ENCODE measurements at regions of chr6 and their contacts with region 1.

Region 1: GRCh38 chr6:4487546-4487945 is 288.7 kb upstream of the CDYL start:
- DNase-seq: peak; percentile 66
- H3K4me3 ChIP-seq: no peak overlapping the region
- H3K27ac ChIP-seq: peak overlapping the region; percentile 67
- H3K4me1 ChIP-seq: 0 out of 2 replicates have a peak, but pooled peaks cover 7% of the 10 kb centered on the region
- H3K27me3 ChIP-seq: no peaks in the 10 kb centered on the region
- CTCF ChIP-seq: no peak

Region 2: DNA sequence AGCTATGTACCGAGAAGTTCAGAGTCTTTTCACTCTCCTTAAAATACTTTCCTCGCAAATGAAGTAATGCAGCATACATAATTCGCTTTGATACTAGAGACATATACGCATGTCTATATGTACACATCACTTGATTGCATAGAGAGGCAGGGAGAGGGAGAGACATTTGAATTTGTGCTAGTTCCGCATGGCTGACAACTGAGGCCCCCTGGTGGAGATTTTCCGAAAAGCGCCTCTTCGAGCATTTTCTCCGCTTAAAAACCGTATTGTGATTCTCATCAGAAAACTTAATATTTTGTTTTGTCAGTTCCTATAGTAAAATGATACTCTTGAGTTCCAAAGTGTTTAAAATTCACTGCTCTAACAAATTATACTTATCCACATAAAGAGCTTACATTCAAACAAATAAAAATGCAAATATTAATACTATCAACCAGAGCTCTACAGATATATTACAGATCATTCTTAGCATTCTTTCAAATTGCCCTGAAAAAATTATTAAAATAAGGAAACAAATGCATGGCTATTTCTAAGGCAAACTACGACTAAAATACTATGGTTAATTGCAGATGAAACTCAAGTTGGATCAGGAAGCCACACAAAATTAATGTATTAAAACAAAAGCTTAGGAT is 1737.5 kb before region 1 on chr6:
- CTCF ChIA-PET with region 1: interaction called, 18 read pairs
- POLR2A ChIA-PET with region 1: no interaction called
- intact Hi-C with region 1: no loop called
- DNase-seq: peak in 1 of 2 experiments; percentile 30
- H3K4me3 ChIP-seq: no peak overlapping the region
- H3K27ac ChIP-seq: no peak overlapping the region
- H3K4me1 ChIP-seq: no peaks in the 10 kb centered on the region
- H3K27me3 ChIP-seq: no peaks in the 10 kb centered on the region
- CTCF ChIP-seq: peak; percentile 69

Measured in PC-9 (cell line).